Right ventricle myocardium superior (tissue), 1 donor: ENCODE measurements at regions of chr19 and their contacts with region 1.

Region 1: DNA sequence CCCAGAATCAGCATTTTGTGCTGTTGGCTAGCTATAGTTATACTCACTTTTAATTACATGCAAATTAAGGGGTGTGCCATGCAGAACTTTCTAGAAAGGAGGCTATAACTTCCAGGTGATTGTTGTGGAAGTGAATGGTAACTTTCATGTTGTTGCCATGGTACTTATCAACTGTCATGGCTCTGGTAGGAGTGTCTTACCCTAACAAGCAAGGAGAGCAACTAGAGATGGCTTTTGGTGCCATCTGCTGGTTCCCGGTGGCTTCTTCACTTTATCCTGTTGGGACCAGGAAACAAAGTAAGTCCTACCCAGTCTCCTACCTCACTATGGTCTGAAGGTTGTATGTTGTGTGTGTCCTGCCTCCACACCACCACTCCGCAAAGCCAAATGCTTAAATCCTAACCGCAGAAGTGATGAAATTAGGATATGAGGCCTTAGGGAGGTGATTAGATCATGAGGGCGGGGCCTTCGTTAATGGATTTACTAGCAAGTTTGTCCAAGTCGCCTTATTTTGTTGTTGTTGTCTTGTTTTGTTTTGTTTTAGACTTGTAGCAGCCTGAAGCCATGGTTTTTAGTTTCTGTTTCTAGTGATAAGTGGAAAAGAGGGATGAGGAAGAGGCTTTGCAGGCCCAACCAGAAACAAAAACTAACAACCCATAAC is 22.6 kb downstream of the FBXL12 start:
- DNase-seq: peak; percentile 86
- ATAC-seq: peak; percentile 25

Region 2: GRCh38 chr19:9140159-9140874 is 655.9 kb before region 1 on chr19 and contains the start of gene ZNF317:
- intact Hi-C with region 1: loop called (anchors 5 kb)
- DNase-seq: peak; percentile 96
- ATAC-seq: peak; percentile 99
- total RNA-seq, gene ZNF317: 12.3 TPM

Region 3: GRCh38 chr19:9205501-9206113 is 590.6 kb before region 1 on chr19:
- intact Hi-C with region 1: loop called (anchors 10 kb)
- DNase-seq: peak; percentile 82
- ATAC-seq: peak; percentile 70

Region 4: GRCh38 chr19:9309974-9310446 is 486.2 kb before region 1 on chr19:
- intact Hi-C with region 1: loop called (anchors 10 kb)
- DNase-seq: peak; percentile 95
- ATAC-seq: peak; percentile 94

Region 5: GRCh38 chr19:9627856-9628255 is 168.4 kb before region 1 on chr19:
- intact Hi-C with region 1: loop called (anchors 2 kb)
- DNase-seq: no peak
- ATAC-seq: no peak

Region 6: DNA sequence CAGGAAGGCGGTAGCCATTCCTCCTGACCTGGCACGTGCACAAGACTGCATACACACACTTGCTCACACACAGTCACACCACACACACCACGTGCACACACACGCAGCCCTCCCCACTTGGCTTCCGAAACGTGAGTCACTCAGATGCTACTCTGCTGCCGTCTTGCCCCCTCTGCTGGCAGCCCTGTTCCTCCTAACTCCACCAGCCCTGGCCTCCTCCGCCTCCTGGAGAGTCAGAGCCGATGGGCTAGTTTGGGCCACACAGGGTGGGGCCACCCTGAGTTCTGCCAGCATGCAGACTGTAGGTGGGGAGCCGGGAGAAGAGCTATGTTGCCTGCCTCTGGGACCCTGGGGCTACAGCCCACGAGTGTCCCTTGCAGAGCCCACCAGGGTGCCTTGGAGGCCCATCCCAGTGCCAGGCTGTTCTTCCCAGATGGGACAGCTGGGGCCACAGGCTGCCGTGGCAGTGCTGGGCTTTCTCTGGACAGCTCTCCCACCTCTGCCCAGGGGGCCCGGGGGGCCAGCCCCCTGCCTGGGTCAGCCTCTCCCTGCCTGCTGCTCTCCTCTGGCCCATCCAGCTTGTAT is 50.9 kb after region 1 on chr19:
- intact Hi-C with region 1: no loop called
- DNase-seq: peak; percentile 64
- ATAC-seq: peak; percentile 27